ENCODE measurements at regions of chr21 and their contacts with region 1.

Region 1: GRCh38 chr21:31873696-31874599 is 1.1 kb downstream of the HUNK start:
- DNase-seq: no peak
- H3K4me3 ChIP-seq: peak overlapping the region; percentile 61
- H3K27me3 ChIP-seq: peaks cover 19% of the 10 kb centered on the region
- CTCF ChIP-seq: peak; percentile 62

Region 2: GRCh38 chr21:31509194-31510017 is 364.5 kb before region 1 on chr21:
- CTCF ChIA-PET with region 1: no interaction called
- POLR2A ChIA-PET with region 1: no interaction called
- DNase-seq: no peak
- H3K4me3 ChIP-seq: no peak overlapping the region
- H3K27me3 ChIP-seq: no peaks in the 10 kb centered on the region
- CTCF ChIP-seq: no peak

Region 3: GRCh38 chr21:31888936-31889371 is 15.0 kb after region 1 on chr21:
- CTCF ChIA-PET with region 1: interaction called, 10 read pairs
- POLR2A ChIA-PET with region 1: no interaction called
- DNase-seq: no peak
- H3K4me3 ChIP-seq: no peak overlapping the region
- H3K27me3 ChIP-seq: no peaks in the 10 kb centered on the region
- CTCF ChIP-seq: no peak

Region 4: GRCh38 chr21:31900121-31900895 is 26.4 kb after region 1 on chr21:
- CTCF ChIA-PET with region 1: interaction called, 14 read pairs
- POLR2A ChIA-PET with region 1: no interaction called
- DNase-seq: no peak
- H3K4me3 ChIP-seq: no peak overlapping the region
- H3K27me3 ChIP-seq: no peaks in the 10 kb centered on the region
- CTCF ChIP-seq: no peak

Region 5: DNA sequence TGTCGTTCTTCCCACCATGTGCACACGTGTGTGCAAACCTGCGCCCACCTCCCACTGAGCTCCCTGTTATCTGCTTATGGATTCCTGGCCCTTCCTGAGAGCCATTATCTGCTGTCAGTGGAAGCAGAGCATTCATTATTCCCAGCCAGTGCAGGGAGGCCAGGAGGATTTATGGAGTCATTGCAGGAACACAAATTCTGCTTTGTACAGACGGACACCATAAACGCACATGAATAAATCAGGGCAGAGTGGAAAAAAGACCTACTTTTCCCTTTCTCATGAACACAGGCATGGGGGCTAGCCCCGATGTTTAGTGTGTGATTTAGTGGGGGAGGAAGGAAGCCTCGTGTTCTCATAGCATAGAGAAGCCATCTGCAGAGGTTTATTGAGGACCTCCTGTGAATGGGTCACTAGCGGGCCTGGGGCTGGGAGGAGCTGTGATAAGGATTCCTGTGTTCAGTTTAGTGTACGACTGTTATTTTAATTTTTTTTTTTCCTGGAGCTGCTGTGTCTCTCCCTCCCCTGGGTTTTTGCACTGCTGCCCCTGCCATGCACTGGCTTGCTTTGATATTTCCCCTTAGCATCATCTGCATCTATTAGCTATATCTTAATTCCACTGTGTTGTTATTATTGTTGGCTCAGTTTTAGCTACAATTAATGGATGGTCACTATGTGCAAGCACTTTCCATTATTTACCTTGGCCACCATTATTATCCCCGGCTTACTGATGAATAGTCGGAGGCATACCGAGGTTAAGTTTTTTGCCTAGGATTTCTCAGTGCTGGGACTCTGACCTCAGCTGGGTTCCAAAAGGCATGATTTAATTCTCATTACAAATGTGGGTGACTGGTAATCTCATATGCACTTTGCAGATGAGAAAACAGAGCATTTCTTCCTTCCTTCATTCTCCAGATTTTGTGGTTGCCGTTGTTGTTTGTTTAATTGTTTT is 31.8 kb after region 1 on chr21:
- CTCF ChIA-PET with region 1: interaction called, 14 read pairs
- POLR2A ChIA-PET with region 1: no interaction called
- DNase-seq: no peak
- H3K4me3 ChIP-seq: no peak overlapping the region
- H3K27me3 ChIP-seq: no peaks in the 10 kb centered on the region
- CTCF ChIP-seq: no peak

Measured in BJ (cell line).